ENCODE measurements at regions of chr2 and their contacts with region 1.

Region 1: GRCh38 chr2:237691908-237692600 is 64.7 kb downstream of the LRRFIP1 start:
- DNase-seq: no peak
- H3K4me3 ChIP-seq: peak overlapping the region; percentile 88 to 93
- H3K27ac ChIP-seq: peak overlapping the region; percentile 99
- H3K4me1 ChIP-seq: peaks cover 75% of the 10 kb centered on the region
- H3K27me3 ChIP-seq: no peaks in the 10 kb centered on the region
- CTCF ChIP-seq: no peak
- POLR2A ChIP-seq: peak in 1 of 2 donors; percentile 84

Region 2: GRCh38 chr2:237739101-237739500 is 47.0 kb after region 1 on chr2:
- intact Hi-C with region 1: loop called (anchors 5 kb)
- DNase-seq: peak in 1 of 2 donors; percentile 86
- H3K4me3 ChIP-seq: no peak overlapping the region
- H3K27ac ChIP-seq: peak overlapping the region; percentile 57
- H3K4me1 ChIP-seq: peaks cover 84% of the 10 kb centered on the region
- H3K27me3 ChIP-seq: no peaks in the 10 kb centered on the region
- CTCF ChIP-seq: no peak
- POLR2A ChIP-seq: no peak

Measured in vagina (tissue), 2 donors.